ENCODE measurements at regions of chr2 and their contacts with region 1.

Region 1: DNA sequence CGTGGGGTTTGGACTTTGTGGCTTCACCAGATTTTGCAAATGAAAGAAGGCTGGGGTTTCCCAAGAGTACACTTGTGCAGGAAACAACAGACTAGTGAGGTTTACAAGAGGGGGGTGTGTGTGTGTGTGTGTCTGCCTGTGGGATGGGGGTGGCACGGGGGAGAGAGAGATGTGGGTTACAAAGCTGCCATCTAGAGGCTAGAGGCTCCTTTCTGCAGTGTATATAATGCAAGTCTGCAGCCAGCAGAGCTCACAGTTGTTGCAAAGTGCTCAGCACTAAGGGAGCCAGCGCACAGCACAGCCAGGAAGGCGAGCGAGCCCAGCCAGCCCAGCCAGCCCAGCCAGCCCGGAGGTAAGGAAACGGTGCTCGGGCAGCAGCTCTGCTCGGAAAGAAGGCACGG is at the start of gene ACKR3:
- DNase-seq: peak; percentile 84 to 87 (median 84)
- ATAC-seq: peak; percentile 74 to 86 (median 84)
- H3K4me3 ChIP-seq: peak within 1 kb of the TSS; percentile 17 to 80 (median 59)
- H3K27ac ChIP-seq: peak within 1 kb of the TSS; percentile 85 to 98 (median 96)
- H3K4me1 ChIP-seq: peaks cover 6 to 68% (median 48%) of the 10 kb centered on the region in 12 donors
- H3K27me3 ChIP-seq: no peaks in the 10 kb centered on the region
- CTCF ChIP-seq: peak in 11 of 12 donors; percentile 13 to 64 (median 43)
- POLR2A ChIP-seq: peak; percentile 68 to 88
- total RNA-seq, gene ACKR3: 15.7 to 56.3 (median 49.4) TPM

Region 2: GRCh38 chr2:236352761-236353593 is 216.6 kb before region 1 on chr2:
- intact Hi-C with region 1: loop called in 6 of 10 experiments (anchors 5 to 10 kb)
- DNase-seq: no peak
- ATAC-seq: peak in 1 of 4 donors; percentile 49
- H3K4me3 ChIP-seq: no peak overlapping the region
- H3K27ac ChIP-seq: no peak overlapping the region
- H3K4me1 ChIP-seq: no peaks in the 10 kb centered on the region
- H3K27me3 ChIP-seq: no peaks in the 10 kb centered on the region
- CTCF ChIP-seq: peak; percentile 75 to 88 (median 83)
- POLR2A ChIP-seq: no peak

Region 3: GRCh38 chr2:236663287-236664101 is 93.9 kb after region 1 on chr2:
- intact Hi-C with region 1: loop called in 3 of 10 experiments (anchors 5 to 10 kb)
- DNase-seq: peak; percentile 68 to 86 (median 79)
- ATAC-seq: peak; percentile 35 to 66 (median 56)
- H3K4me3 ChIP-seq: no peak overlapping the region
- H3K27ac ChIP-seq: peak overlapping the region in 10 of 12 donors; percentile 9 to 71 (median 62)
- H3K4me1 ChIP-seq: peaks cover 0 to 47% (median 37%) of the 10 kb centered on the region in 12 donors
- H3K27me3 ChIP-seq: peaks cover 0 to 3% (median 0%) of the 10 kb centered on the region in 9 donors
- CTCF ChIP-seq: no peak
- POLR2A ChIP-seq: no peak

Region 4: GRCh38 chr2:236731878-236732580 is 162.5 kb after region 1 on chr2:
- intact Hi-C with region 1: loop called in 6 of 10 experiments (anchors 1 to 10 kb)
- DNase-seq: peak in 4 of 5 donors; percentile 82 to 88 (median 85)
- ATAC-seq: peak; percentile 95 to 96 (median 95)
- H3K4me3 ChIP-seq: no peak overlapping the region
- H3K27ac ChIP-seq: peak overlapping the region; percentile 50 to 84 (median 78)
- H3K4me1 ChIP-seq: peaks cover 3 to 32% (median 19%) of the 10 kb centered on the region in 12 donors
- H3K27me3 ChIP-seq: no peaks in the 10 kb centered on the region
- CTCF ChIP-seq: no peak
- POLR2A ChIP-seq: no peak

Region 5: GRCh38 chr2:236745420-236746197 is 176.0 kb after region 1 on chr2:
- intact Hi-C with region 1: no loop called
- DNase-seq: no peak
- ATAC-seq: no peak
- H3K4me3 ChIP-seq: no peak overlapping the region
- H3K27ac ChIP-seq: no peak overlapping the region
- H3K4me1 ChIP-seq: peaks cover 0 to 41% (median 16%) of the 10 kb centered on the region in 12 donors
- H3K27me3 ChIP-seq: no peaks in the 10 kb centered on the region
- CTCF ChIP-seq: no peak
- POLR2A ChIP-seq: no peak